A673 (cell line): ENCODE measurements at regions of chr11 and their contacts with region 1.

Region 1: DNA sequence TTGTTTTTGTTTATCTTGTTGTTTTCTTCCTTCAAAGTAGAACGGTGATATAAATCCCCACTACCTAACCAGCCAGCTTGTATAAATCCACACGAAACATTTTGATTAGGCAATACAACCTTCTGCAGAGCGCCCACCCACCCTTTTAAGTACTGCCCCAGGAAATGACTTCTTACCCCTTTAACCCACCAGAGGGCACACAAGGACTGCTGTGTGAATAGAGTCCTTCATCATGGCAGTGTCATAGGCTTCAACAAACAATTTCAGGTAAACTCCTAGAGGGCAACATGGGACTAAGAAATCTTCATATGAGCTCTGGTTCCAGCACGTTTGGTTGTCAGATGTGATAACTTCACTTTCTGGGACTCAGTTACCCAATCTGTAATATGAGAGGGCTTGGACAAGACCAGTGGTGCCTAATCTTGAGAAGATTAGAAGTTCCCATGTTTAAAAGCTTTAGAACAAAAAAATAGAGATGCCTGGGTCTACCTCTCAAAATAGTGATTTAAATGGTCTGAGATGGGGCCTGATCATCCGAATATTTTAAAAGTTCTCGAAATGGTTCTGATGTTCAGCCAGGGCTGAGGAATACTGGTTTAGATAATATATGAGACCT is 56.1 kb downstream of the PIWIL4 start:
- DNase-seq: peak; percentile 90
- H3K4me3 ChIP-seq: no peak overlapping the region
- H3K27ac ChIP-seq: no peak overlapping the region
- H3K4me1 ChIP-seq: no peaks in the 10 kb centered on the region
- H3K27me3 ChIP-seq: no peaks in the 10 kb centered on the region
- CTCF ChIP-seq: peak; percentile 90

Region 2: DNA sequence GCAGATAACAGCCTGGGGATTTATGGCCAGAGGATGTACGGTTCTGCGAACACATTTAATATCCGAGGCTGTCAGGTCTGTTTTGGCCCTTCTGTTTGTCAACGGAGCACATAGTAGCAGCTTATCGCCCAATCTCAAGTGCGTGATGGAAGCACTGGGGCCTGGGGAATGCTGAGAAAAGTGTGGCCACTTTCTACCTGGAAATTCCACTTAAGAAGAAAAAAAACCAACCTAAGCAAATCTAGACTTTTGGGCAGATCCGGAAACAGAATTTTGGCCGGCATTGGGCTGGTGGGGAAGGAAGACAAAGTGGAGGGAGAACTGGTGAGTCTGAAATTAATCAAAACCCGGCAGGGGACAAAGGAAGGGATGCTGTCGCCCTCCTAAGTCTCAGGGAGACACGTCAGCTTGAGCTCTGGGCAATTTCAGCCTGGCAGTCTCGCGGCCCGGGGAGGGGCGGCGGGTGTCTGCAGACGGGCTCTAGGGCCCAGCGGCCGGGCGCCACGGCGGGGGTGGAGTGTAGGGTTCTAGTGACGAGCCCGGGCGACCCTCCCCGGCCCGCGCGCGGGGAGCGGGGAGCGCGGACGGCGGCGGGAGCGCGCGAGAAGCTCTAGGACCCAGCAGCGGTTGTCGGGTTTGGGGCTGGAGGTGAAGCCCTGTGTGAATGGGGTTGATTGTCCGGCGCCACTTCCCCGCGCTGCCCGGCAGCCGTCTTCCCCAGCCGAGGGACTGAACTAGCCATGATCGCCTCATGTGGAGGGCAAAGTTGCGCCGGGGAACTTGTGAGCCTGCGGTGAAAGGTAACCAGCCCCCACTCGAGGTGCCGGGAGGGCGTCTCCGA is 144.8 kb after region 1 on chr11 and contains the start of gene AMOTL1:
- CTCF ChIA-PET with region 1: interaction called, 9 read pairs
- POLR2A ChIA-PET with region 1: no interaction called
- intact Hi-C with region 1: loop called (anchors 2 kb)
- DNase-seq: peak; percentile 99
- H3K4me3 ChIP-seq: peak within 1 kb of the TSS; percentile 82
- H3K27ac ChIP-seq: peak within 1 kb of the TSS; percentile 82
- H3K4me1 ChIP-seq: peaks cover 14% of the 10 kb centered on the region
- H3K27me3 ChIP-seq: no peaks in the 10 kb centered on the region
- CTCF ChIP-seq: no peak
- total RNA-seq, gene AMOTL1: 67.8 and 68.5 TPM in 2 replicates

Region 3: GRCh38 chr11:94897330-94897768 is 274.1 kb after region 1 on chr11:
- CTCF ChIA-PET with region 1: interaction called, 7 read pairs
- POLR2A ChIA-PET with region 1: no interaction called
- intact Hi-C with region 1: loop called (anchors 1 kb)
- DNase-seq: peak; percentile 65
- H3K4me3 ChIP-seq: no peak overlapping the region
- H3K27ac ChIP-seq: no peak overlapping the region
- H3K4me1 ChIP-seq: no peaks in the 10 kb centered on the region
- H3K27me3 ChIP-seq: no peaks in the 10 kb centered on the region
- CTCF ChIP-seq: peak; percentile 97

Region 4: DNA sequence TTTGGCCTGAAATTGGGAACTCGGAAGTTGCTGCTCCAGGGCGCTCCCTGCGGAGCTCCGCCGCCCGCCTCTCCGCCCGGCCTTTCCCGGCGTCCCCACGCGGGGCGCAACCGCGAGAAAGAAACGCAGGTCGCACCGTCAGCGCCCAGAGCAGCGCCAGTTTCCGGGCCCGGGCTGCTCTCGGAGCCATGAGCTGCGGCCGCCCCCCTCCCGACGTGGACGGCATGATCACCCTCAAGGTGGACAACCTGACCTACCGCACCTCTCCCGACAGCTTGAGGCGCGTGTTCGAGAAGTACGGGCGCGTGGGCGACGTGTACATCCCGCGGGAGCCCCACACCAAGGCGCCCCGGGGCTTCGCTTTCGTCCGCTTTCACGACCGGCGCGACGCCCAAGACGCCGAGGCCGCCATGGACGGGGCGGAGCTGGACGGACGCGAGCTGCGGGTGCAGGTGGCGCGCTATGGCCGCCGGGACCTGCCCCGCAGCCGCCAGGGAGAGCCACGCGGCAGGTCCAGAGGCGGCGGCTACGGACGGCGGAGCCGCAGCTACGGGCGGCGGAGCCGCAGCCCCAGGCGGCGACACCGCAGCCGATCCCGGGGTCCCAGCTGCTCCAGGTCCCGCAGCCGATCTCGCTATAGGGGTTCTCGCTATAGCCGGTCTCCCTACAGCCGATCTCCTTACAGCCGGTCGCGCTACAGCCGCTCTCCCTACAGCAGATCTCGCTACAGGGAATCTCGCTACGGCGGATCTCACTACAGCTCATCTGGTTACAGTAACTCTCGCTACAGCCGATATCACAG is 444.0 kb after region 1 on chr11:
- CTCF ChIA-PET with region 1: interaction called, 4 read pairs
- POLR2A ChIA-PET with region 1: no interaction called
- intact Hi-C with region 1: loop called (anchors 2 kb)
- DNase-seq: peak; percentile 89
- H3K4me3 ChIP-seq: peak overlapping the region; percentile 68
- H3K27ac ChIP-seq: peak overlapping the region; percentile 86
- H3K4me1 ChIP-seq: peaks cover 9% of the 10 kb centered on the region
- H3K27me3 ChIP-seq: no peaks in the 10 kb centered on the region
- CTCF ChIP-seq: peak; percentile 64

Region 5: GRCh38 chr11:95150946-95151684 is 527.9 kb after region 1 on chr11:
- CTCF ChIA-PET with region 1: no interaction called
- POLR2A ChIA-PET with region 1: no interaction called
- intact Hi-C with region 1: loop called (anchors 1 kb)
- DNase-seq: peak; percentile 96
- H3K4me3 ChIP-seq: peak overlapping the region; percentile 52
- H3K27ac ChIP-seq: no peak overlapping the region
- H3K4me1 ChIP-seq: peaks cover 11% of the 10 kb centered on the region
- H3K27me3 ChIP-seq: no peaks in the 10 kb centered on the region
- CTCF ChIP-seq: peak; percentile 93